K562 (cell line): ENCODE measurements at regions of chr12 and their contacts with region 1.

Region 1: DNA sequence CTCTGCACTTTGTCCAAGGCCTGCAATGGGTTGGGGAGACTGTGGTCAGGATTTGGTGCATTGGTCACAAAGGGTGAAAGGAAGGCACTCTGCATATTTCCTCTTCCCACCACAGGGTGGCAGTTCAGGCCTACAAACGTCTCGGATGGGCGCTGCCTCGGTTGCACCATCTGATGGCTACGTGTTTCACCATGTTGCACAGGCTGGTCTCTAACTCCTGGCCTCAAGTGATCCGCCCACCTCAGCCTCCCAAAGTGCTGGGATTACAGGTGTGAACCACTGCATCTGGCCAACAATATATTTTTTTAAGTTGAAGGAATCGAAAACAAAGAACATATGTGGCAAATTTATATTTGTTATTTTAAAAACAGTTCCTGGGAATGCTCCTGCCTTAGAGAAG is 35.1 kb downstream of the TMBIM6 start:
- DNase-seq: peak; percentile 70 to 78 (median 72)
- ATAC-seq: peak; percentile 93
- H3K4me3 ChIP-seq: no peak overlapping the region
- H3K27ac ChIP-seq: no peak overlapping the region; the same call in 2 of the 3 replicates
- H3K4me1 ChIP-seq: peaks cover 0 to 6% of the 10 kb centered on the region in 2 experiments; a peak in 2 of 5 replicates
- H3K27me3 ChIP-seq: no peaks in the 10 kb centered on the region
- CTCF ChIP-seq: peak; percentile 85 to 93 (median 92)
- EP300 ChIP-seq: no peak
- POLR2A ChIP-seq: no peak
- RAD21 ChIP-seq: peak; percentile 93 to 95

Region 2: GRCh38 chr12:49538510-49539403 is 237.7 kb before region 1 on chr12 and contains the start of gene KCNH3:
- CTCF ChIA-PET with region 1: no interaction called
- POLR2A ChIA-PET with region 1: no interaction called
- in situ Hi-C with region 1: no loop called
- intact Hi-C with region 1: no loop called
- DNase-seq: peak; percentile 90 to 98 (median 96)
- ATAC-seq: peak; percentile 93
- H3K4me3 ChIP-seq: peak within 1 kb of the TSS; percentile 38
- H3K27ac ChIP-seq: no peak within 1 kb of the TSS
- H3K4me1 ChIP-seq: peaks cover 0 to 42% of the 10 kb centered on the region in 2 experiments; a peak in 4 of 5 replicates
- H3K27me3 ChIP-seq: peaks cover 14 to 34% of the 10 kb centered on the region in 2 experiments
- CTCF ChIP-seq: no peak
- EP300 ChIP-seq: no peak
- POLR2A ChIP-seq: no peak
- RAD21 ChIP-seq: no peak
- polyA plus RNA-seq, gene KCNH3: not detected

Region 3: GRCh38 chr12:49644620-49644994 is 131.8 kb before region 1 on chr12:
- CTCF ChIA-PET with region 1: interaction called, 7 read pairs
- POLR2A ChIA-PET with region 1: interaction called, 3 read pairs
- in situ Hi-C with region 1: no loop called
- intact Hi-C with region 1: loop called (anchors 1 kb)
- DNase-seq: peak; percentile 83 to 91 (median 87)
- ATAC-seq: peak; percentile 95
- H3K4me3 ChIP-seq: no peak overlapping the region
- H3K27ac ChIP-seq: 0 out of 3 replicates have a peak overlapping the region, but pooled peaks have one; percentile 25
- H3K4me1 ChIP-seq: peaks cover 0 to 16% of the 10 kb centered on the region in 2 experiments; a peak in 3 of 5 replicates
- H3K27me3 ChIP-seq: no peaks in the 10 kb centered on the region
- CTCF ChIP-seq: peak; percentile 95 to 96 (median 96)
- EP300 ChIP-seq: no peak
- POLR2A ChIP-seq: no peak
- RAD21 ChIP-seq: peak; percentile 99

Region 4: GRCh38 chr12:49740930-49741881 is 35.2 kb before region 1 on chr12 and contains the start of gene TMBIM6:
- CTCF ChIA-PET with region 1: no interaction called
- POLR2A ChIA-PET with region 1: interaction called, 6 read pairs
- in situ Hi-C with region 1: no loop called
- intact Hi-C with region 1: loop called (anchors 2 kb)
- DNase-seq: peak; percentile 96 to 100 (median 96)
- ATAC-seq: peak; percentile 96
- H3K4me3 ChIP-seq: peak within 1 kb of the TSS; percentile 71
- H3K27ac ChIP-seq: peak within 1 kb of the TSS; percentile 99
- H3K4me1 ChIP-seq: peaks cover 10 to 18% of the 10 kb centered on the region in 2 experiments
- H3K27me3 ChIP-seq: no peaks in the 10 kb centered on the region
- CTCF ChIP-seq: peak; percentile 91 to 99 (median 96)
- EP300 ChIP-seq: peak; percentile 48
- POLR2A ChIP-seq: peak; percentile 100
- RAD21 ChIP-seq: peak; percentile 49 to 66
- polyA plus RNA-seq, gene TMBIM6: 1,205 to 1,288 TPM

Region 5: DNA sequence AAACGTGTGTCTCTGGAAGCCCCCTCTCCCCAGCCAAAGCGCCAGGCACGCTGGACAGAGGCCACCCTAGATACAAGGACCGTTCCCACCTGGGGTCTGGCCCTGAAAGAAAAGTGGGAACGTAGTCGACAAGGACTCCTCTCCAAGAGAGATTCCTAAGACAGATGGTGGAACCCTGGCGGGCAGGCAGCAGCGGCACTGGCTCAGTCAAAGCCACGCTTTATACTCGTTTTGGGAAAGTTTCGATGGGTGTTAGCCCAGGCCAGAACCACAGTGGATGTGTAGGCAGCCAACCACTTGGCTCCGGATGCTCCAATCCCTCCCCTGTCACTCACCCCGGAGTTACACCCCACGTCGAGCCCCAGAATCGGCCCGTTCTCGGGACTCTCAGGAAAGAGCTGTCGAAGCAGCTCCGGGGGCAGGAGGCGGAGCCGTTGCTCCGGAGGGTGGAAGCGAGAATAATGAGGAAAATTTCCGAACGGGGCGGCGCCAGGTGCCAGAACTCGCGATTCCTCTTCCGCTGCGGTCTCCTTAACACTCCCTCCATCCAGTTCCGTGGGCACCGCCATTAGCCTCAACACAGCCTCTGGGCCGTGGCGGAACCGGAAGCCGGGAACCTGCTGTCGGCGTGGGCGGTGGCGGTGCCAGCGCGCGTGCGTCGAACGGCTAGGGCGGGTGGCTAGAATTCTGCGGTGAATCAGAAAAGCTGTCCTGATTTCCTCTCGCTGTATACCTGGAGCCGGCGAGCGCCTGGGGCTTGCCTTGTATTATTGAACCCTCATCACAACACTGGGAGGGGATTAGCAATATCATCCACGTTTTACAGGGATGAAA is 66.3 kb after region 1 on chr12 and contains the start of gene BCDIN3D:
- CTCF ChIA-PET with region 1: interaction called, 63 read pairs
- POLR2A ChIA-PET with region 1: no interaction called
- in situ Hi-C with region 1: loop called (anchors 5 kb)
- intact Hi-C with region 1: loop called (anchors 1 kb)
- DNase-seq: peak; percentile 89 to 94 (median 90)
- ATAC-seq: peak; percentile 97
- H3K4me3 ChIP-seq: peak within 1 kb of the TSS; percentile 71
- H3K27ac ChIP-seq: peak within 1 kb of the TSS; percentile 82
- H3K4me1 ChIP-seq: peaks cover 16 to 17% of the 10 kb centered on the region in 2 experiments
- H3K27me3 ChIP-seq: no peaks in the 10 kb centered on the region
- CTCF ChIP-seq: no peak
- EP300 ChIP-seq: no peak
- POLR2A ChIP-seq: peak; percentile 94
- RAD21 ChIP-seq: no peak
- polyA plus RNA-seq, gene BCDIN3D: 6.3 to 6.9 TPM

Region 6: GRCh38 chr12:49945394-49946080 is 169.1 kb after region 1 on chr12:
- CTCF ChIA-PET with region 1: no interaction called
- POLR2A ChIA-PET with region 1: no interaction called
- in situ Hi-C with region 1: no loop called
- intact Hi-C with region 1: loop called (anchors 5 kb)
- DNase-seq: peak; percentile 90 to 92 (median 91)
- ATAC-seq: peak; percentile 99
- H3K4me3 ChIP-seq: no peak overlapping the region
- H3K27ac ChIP-seq: peak overlapping the region; percentile 35; the same call in 1 of the 3 replicates
- H3K4me1 ChIP-seq: peaks cover 14 to 20% of the 10 kb centered on the region in 2 experiments; a peak in 4 of 5 replicates
- H3K27me3 ChIP-seq: no peaks in the 10 kb centered on the region
- CTCF ChIP-seq: peak; percentile 87 to 95 (median 90)
- EP300 ChIP-seq: peak; percentile 54; the same call in 1 of the 2 replicates
- POLR2A ChIP-seq: 0 out of 2 replicates have a peak, but pooled peaks have one; percentile 19
- RAD21 ChIP-seq: peak; percentile 42 to 61

Region 7: DNA sequence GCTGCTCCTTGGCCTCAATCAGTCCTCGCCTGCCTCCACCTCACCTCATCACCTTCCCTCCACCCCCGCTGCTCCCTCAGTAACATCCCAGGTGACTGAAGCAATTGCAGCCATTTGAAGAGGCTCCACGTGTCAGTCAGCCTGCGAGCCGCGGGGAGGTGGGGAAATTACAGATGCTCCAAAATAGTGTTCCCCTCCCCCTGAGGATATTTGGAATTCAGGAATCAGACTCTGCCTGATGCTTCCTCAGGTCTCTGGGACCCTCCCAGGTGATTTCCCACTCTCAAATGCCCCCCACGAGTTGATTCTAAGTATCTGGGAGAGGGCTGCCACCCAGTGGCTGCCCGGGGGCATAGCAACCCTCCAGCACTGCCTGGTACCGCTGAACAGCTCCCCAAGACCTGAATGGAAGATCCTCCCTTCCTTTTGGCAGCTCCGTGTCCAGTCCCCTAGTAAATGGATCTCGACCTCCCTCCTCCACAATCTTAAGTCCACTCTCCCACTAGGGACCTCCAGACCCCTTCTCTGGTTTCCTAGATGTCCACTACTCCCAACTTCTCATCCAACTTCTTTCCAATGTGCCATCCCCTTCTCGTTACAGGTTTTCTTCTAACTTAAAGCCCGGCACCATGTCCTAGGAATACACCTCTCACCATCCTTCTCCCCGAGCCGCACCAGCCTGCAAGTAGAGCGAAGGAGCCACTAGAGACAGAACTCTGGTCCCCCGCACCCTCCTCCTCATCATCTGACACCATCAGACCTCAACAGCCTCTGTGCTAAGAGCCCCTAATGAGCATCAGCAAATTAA is 279.6 kb after region 1 on chr12:
- CTCF ChIA-PET with region 1: no interaction called
- POLR2A ChIA-PET with region 1: no interaction called
- in situ Hi-C with region 1: loop called (anchors 5 kb)
- intact Hi-C with region 1: loop called (anchors 5 kb)
- DNase-seq: peak; percentile 65 to 77 (median 74)
- ATAC-seq: peak; percentile 70
- H3K4me3 ChIP-seq: no peak overlapping the region
- H3K27ac ChIP-seq: no peak overlapping the region
- H3K4me1 ChIP-seq: peaks cover 18 to 38% of the 10 kb centered on the region in 2 experiments
- H3K27me3 ChIP-seq: peaks cover 17 to 60% of the 10 kb centered on the region in 2 experiments; a peak in 4 of 5 replicates
- CTCF ChIP-seq: peak; percentile 88 to 99 (median 93)
- EP300 ChIP-seq: no peak
- POLR2A ChIP-seq: no peak
- RAD21 ChIP-seq: peak; percentile 96 to 97

Region 8: GRCh38 chr12:50074936-50075807 is 298.8 kb after region 1 on chr12:
- CTCF ChIA-PET with region 1: interaction called, 3 read pairs
- POLR2A ChIA-PET with region 1: no interaction called
- in situ Hi-C with region 1: no loop called
- intact Hi-C with region 1: loop called (anchors 1 kb)
- DNase-seq: peak; percentile 82 to 89 (median 82)
- ATAC-seq: peak; percentile 94
- H3K4me3 ChIP-seq: no peak overlapping the region
- H3K27ac ChIP-seq: no peak overlapping the region
- H3K4me1 ChIP-seq: peaks cover 23 to 24% of the 10 kb centered on the region in 2 experiments; a peak in 4 of 5 replicates
- H3K27me3 ChIP-seq: no peaks in the 10 kb centered on the region
- CTCF ChIP-seq: peak; percentile 90 to 95 (median 94)
- EP300 ChIP-seq: no peak
- POLR2A ChIP-seq: no peak
- RAD21 ChIP-seq: peak; percentile 91 to 97